PC-9 (cell line): ENCODE measurements at regions of chr1 and their contacts with region 1.

Region 1: DNA sequence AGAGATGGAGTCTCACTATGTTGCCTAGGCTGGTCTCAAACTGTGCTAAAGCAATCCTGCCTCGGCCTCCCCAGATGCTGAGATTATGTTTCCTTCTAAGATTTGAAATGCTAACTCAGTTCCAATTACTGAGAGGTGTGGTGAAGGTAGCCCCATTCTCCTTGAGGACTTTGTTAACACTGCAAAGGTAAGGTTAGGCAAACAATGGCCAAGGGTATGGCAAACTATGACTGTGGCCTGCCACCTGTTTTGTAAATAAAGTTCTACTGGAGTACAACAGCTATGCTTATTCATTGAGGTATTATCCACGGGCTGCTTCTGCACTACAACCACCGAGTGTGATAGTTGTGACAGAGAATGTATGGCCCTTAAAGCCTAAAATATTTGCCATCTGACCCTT is 9.6 kb upstream of the RIT1 start:
- DNase-seq: no peak
- H3K4me3 ChIP-seq: no peak overlapping the region
- H3K27ac ChIP-seq: no peak overlapping the region
- H3K4me1 ChIP-seq: peaks cover 6% of the 10 kb centered on the region
- H3K27me3 ChIP-seq: no peaks in the 10 kb centered on the region
- CTCF ChIP-seq: no peak

Region 2: DNA sequence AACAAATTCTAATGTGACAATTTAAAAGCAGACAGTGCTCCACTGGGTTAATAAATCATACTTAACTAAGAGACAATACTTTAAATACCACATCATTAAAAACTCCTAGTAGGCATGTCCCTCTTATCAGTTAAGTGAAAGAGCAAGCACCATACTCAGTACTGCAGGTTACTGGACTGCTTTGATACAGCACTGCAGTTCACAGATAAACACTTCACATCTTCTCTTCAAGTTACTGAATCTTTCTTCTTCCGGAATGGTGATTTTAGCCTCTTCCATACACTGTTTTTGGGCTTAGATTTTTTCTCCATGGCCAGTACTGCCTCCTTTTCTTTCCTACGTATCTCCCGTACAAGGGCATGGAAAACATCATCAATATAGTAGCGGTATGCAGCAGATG is 20.6 kb before region 1 on chr1:
- CTCF ChIA-PET with region 1: no interaction called
- POLR2A ChIA-PET with region 1: no interaction called
- intact Hi-C with region 1: no loop called
- DNase-seq: no peak
- H3K4me3 ChIP-seq: no peak overlapping the region
- H3K27ac ChIP-seq: no peak overlapping the region
- H3K4me1 ChIP-seq: no peaks in the 10 kb centered on the region
- H3K27me3 ChIP-seq: no peaks in the 10 kb centered on the region
- CTCF ChIP-seq: no peak

Region 3: GRCh38 chr1:155967341-155968050 is 46.8 kb after region 1 on chr1:
- CTCF ChIA-PET with region 1: interaction called, 13 read pairs
- POLR2A ChIA-PET with region 1: no interaction called
- intact Hi-C with region 1: no loop called
- DNase-seq: no peak
- H3K4me3 ChIP-seq: no peak overlapping the region
- H3K27ac ChIP-seq: no peak overlapping the region
- H3K4me1 ChIP-seq: peaks cover 15% of the 10 kb centered on the region
- H3K27me3 ChIP-seq: no peaks in the 10 kb centered on the region
- CTCF ChIP-seq: no peak